Activated CD8-positive, alpha-beta T cell treated with anti-CD3 and anti-CD28 coated beads, Interleukin-2, amount 10 ng/mL, durations not matched to agents 7 days and 5 days (primary cell): ENCODE measurements at regions of chr11 and their contacts with region 1.

Region 1: GRCh38 chr11:102293873-102294601 is 23.2 kb upstream of the BIRC3 start:
- DNase-seq: peak; percentile 51
- ATAC-seq: peak; percentile 91
- H3K4me3 Mint-ChIP-seq: peak overlapping the region; percentile 73
- H3K27ac Mint-ChIP-seq: peak overlapping the region; percentile 88
- H3K4me1 Mint-ChIP-seq: peaks cover 25% of the 10 kb centered on the region
- H3K27me3 Mint-ChIP-seq: no peaks in the 10 kb centered on the region

Region 2: DNA sequence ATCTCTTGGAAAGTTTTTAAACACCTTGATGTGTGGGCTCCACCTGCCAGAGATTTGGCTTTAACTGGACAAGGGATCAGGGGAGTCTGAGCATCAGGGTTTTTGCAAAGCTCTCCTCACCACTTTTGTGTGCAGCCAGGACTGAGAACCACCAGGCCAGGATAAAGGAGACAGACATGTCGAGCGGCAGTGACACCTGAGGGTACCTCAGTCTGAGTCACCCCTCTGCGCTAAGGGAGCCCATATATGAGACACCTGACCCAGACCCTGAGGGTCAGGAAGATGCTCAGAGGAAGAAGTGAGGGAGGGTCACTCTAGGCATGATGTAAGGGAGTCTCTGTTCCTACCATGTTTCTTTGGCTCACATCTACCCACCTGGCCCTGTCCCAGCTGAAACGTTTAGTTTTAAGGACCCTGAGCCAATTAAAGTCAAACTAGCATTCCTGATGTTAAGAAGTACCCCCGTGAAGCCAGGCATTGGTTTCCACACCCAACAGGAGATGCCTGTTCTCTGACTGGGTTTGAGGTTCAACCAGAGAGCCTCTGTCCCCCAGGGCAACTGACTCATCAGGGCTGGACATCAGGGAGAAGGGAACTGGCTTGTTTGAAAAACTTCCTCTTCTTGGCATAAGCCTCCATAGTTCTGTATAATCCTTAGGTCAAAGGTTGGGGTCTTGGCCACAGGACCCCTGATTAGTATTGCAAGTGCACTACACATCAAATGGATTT is 49.2 kb before region 1 on chr11:
- CTCF ChIA-PET with region 1: no interaction called
- POLR2A ChIA-PET with region 1: no interaction called
- DNase-seq: no peak
- ATAC-seq: no peak
- H3K4me3 Mint-ChIP-seq: no peak overlapping the region
- H3K27ac Mint-ChIP-seq: no peak overlapping the region
- H3K4me1 Mint-ChIP-seq: no peaks in the 10 kb centered on the region
- H3K27me3 Mint-ChIP-seq: no peaks in the 10 kb centered on the region

Region 3: GRCh38 chr11:102306048-102306585 is 12.1 kb after region 1 on chr11:
- CTCF ChIA-PET with region 1: interaction called, 484 read pairs
- POLR2A ChIA-PET with region 1: interaction called, 3 read pairs
- DNase-seq: no peak
- ATAC-seq: peak; percentile 36
- H3K4me3 Mint-ChIP-seq: peak overlapping the region; percentile 34
- H3K27ac Mint-ChIP-seq: peak overlapping the region; percentile 85
- H3K4me1 Mint-ChIP-seq: peaks cover 60% of the 10 kb centered on the region
- H3K27me3 Mint-ChIP-seq: no peaks in the 10 kb centered on the region

Region 4: DNA sequence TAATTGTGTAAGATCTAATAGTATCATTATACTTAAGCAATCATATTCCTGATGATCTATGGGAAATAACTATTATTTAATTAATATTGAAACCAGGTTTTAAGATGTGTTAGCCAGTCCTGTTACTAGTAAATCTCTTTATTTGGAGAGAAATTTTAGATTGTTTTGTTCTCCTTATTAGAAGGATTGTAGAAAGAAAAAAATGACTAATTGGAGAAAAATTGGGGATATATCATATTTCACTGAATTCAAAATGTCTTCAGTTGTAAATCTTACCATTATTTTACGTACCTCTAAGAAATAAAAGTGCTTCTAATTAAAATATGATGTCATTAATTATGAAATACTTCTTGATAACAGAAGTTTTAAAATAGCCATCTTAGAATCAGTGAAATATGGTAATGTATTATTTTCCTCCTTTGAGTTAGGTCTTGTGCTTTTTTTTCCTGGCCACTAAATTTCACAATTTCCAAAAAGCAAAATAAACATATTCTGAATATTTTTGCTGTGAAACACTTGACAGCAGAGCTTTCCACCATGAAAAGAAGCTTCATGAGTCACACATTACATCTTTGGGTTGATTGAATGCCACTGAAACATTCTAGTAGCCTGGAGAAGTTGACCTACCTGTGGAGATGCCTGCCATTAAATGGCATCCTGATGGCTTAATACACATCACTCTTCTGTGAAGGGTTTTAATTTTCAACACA is 29.7 kb after region 1 on chr11:
- CTCF ChIA-PET with region 1: interaction called, 484 read pairs
- POLR2A ChIA-PET with region 1: interaction called, 23 read pairs
- DNase-seq: no peak
- ATAC-seq: no peak
- H3K4me3 Mint-ChIP-seq: no peak overlapping the region
- H3K27ac Mint-ChIP-seq: no peak overlapping the region
- H3K4me1 Mint-ChIP-seq: peaks cover 56% of the 10 kb centered on the region
- H3K27me3 Mint-ChIP-seq: no peaks in the 10 kb centered on the region

Region 5: DNA sequence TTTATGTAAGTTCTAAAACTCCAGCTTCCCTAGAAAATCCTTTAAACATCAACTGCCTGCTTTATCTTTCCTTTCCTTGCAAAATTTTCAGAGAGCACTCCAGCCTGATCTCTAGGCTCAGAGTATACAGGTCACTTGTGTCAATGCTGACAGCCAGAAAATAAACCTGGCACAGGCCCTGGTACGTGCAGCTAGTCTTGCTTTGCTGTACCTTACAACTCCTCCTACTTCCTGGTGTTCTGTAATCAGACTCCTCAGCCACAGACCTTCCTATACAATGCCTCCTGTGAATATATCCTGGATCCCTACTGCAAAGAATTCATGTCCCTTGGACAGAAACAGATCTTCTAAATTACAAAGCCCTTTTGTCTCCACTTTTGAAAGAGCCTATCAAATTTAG is 182.8 kb after region 1 on chr11:
- CTCF ChIA-PET with region 1: interaction called, 10 read pairs
- POLR2A ChIA-PET with region 1: no interaction called
- DNase-seq: peak; percentile 69
- ATAC-seq: peak; percentile 97
- H3K4me3 Mint-ChIP-seq: peak overlapping the region; percentile 12
- H3K27ac Mint-ChIP-seq: peak overlapping the region; percentile 90
- H3K4me1 Mint-ChIP-seq: peaks cover 57% of the 10 kb centered on the region
- H3K27me3 Mint-ChIP-seq: no peaks in the 10 kb centered on the region